ENCODE measurements at regions of chr3 and their contacts with region 1.

Region 1: GRCh38 chr3:5390221-5390620 is 202.7 kb downstream of the EDEM1 start:
- DNase-seq: no peak
- ATAC-seq: no peak
- H3K4me3 ChIP-seq: no peak overlapping the region
- H3K27ac ChIP-seq: no peak overlapping the region
- H3K4me1 ChIP-seq: no peaks in the 10 kb centered on the region
- H3K27me3 ChIP-seq: no peaks in the 10 kb centered on the region; the same call in 1 of the 2 replicates
- CTCF ChIP-seq: no peak

Region 2: GRCh38 chr3:5347486-5347885 is 42.7 kb before region 1 on chr3:
- CTCF ChIA-PET with region 1: no interaction called
- POLR2A ChIA-PET with region 1: interaction called, 16 read pairs
- in situ Hi-C with region 1: no loop called
- intact Hi-C with region 1: no loop called
- DNase-seq: no peak
- ATAC-seq: no peak
- H3K4me3 ChIP-seq: no peak overlapping the region
- H3K27ac ChIP-seq: no peak overlapping the region
- H3K4me1 ChIP-seq: no peaks in the 10 kb centered on the region
- H3K27me3 ChIP-seq: no peaks in the 10 kb centered on the region
- CTCF ChIP-seq: no peak

Region 3: GRCh38 chr3:5358911-5359310 is 31.3 kb before region 1 on chr3:
- CTCF ChIA-PET with region 1: no interaction called
- POLR2A ChIA-PET with region 1: no interaction called
- in situ Hi-C with region 1: no loop called
- intact Hi-C with region 1: no loop called
- DNase-seq: no peak
- ATAC-seq: no peak
- H3K4me3 ChIP-seq: no peak overlapping the region
- H3K27ac ChIP-seq: no peak overlapping the region
- H3K4me1 ChIP-seq: no peaks in the 10 kb centered on the region
- H3K27me3 ChIP-seq: no peaks in the 10 kb centered on the region
- CTCF ChIP-seq: no peak

Measured in Panc1 (cell line).